Activated B cell treated with CpG ODN at 0.5 μM for 24 hours (primary cell): ENCODE measurements at regions of chr6 and their contacts with region 1.

Region 1: GRCh38 chr6:88165844-88166492 is at the start of gene CNR1:
- DNase-seq: no peak
- ATAC-seq: peak; percentile 59
- H3K4me3 Mint-ChIP-seq: peak within 1 kb of the TSS; percentile 91
- H3K27ac Mint-ChIP-seq: peak within 1 kb of the TSS; percentile 87
- H3K4me1 Mint-ChIP-seq: peaks cover 34% of the 10 kb centered on the region
- H3K27me3 Mint-ChIP-seq: peaks cover 15% of the 10 kb centered on the region
- CTCF ChIP-seq: no peak
- total RNA-seq, gene CNR1: 2.7 and 4.4 TPM in 2 replicates

Region 2: DNA sequence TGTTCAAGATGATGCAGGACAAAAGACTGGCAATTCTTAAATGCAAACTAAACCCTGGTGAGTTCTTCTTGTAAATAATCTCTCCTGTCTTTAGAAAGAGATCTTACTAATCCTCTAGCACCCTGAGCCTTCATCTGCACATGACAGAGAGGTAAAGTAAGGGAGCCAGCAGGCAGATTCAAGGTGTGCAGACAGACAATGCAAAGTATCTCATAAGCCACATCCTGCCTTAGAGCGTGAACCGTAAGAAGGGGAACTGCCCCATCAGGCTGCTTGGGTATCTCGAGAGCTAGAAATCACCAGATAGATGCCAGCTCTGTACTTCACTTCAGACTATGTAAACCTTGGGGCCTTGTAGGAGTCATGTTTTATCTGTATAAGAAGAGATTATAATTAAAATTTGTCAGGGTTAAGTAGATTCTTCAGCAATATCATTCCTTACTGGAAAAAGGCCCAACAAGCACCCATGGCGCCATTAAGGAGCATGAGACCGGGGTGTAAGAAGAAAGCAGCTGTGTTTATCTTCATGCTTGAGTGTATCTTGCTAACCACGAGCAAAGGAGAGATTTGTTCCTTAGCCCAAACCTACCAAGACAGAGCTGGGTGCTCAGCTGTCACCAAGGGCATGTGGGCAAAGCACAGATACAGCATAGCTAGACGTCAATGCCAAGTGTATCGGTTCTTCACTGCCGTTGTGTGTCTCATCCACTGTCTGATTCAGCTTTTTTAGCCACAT is 24.2 kb before region 1 on chr6:
- CTCF ChIA-PET with region 1: interaction called, 13 read pairs
- POLR2A ChIA-PET with region 1: interaction called, 28 read pairs
- intact Hi-C with region 1: loop called (anchors 1 kb)
- DNase-seq: peak; percentile 33
- ATAC-seq: peak; percentile 91
- H3K4me3 Mint-ChIP-seq: peak overlapping the region; percentile 73
- H3K27ac Mint-ChIP-seq: peak overlapping the region; percentile 96
- H3K4me1 Mint-ChIP-seq: peaks cover 65% of the 10 kb centered on the region
- H3K27me3 Mint-ChIP-seq: no peaks in the 10 kb centered on the region
- CTCF ChIP-seq: no peak